ENCODE measurements at regions of chr17 and their contacts with region 1.

Region 1: DNA sequence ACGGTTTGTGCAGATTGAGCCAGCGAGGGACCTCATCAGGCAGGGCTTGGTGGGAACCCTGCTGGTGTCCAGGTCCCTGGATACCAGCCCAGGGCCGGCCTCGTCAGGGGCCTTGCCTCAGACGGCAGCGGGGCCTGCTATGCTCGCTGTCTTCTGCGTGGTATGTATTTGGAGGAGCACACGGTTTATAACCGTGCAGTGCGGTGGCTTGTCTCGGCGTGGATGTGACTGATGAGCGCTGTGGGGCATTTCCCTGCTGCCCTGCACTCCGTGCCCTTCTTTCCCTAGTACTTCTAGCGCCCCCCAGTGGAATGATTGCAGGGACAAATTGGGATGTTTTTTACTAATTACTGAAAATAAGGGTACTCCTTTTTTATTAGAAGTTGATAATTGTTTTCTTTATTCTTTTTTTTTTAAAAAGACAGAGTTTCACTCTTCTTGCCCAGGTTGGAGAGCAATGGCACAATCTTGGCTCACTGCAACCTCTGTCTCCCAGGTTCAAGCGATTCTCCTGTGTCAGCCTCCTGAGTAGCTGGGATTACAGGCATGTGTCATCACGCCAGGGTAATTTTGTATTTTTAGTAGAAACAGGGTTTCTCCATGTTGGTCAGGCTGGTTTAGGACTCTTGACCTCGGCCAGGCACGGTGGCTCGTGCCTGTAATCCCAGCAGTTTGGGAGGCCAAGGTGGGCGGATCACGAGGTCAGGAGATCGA is 15.3 kb downstream of the TBCD start:
- DNase-seq: peak in 1 of 5 donors; percentile 65
- ATAC-seq: peak in 3 of 4 donors; percentile 66 to 71 (median 67)
- H3K4me3 ChIP-seq: no peak overlapping the region
- H3K27ac ChIP-seq: no peak overlapping the region
- H3K4me1 ChIP-seq: peaks cover 0 to 5% (median 0%) of the 10 kb centered on the region in 12 donors
- H3K27me3 ChIP-seq: no peaks in the 10 kb centered on the region
- CTCF ChIP-seq: peak; percentile 34 to 65 (median 58)
- POLR2A ChIP-seq: no peak

Region 2: GRCh38 chr17:81928544-81929252 is 838.5 kb before region 1 on chr17:
- intact Hi-C with region 1: no loop called
- DNase-seq: no peak
- ATAC-seq: no peak
- H3K4me3 ChIP-seq: peak overlapping the region in 11 of 12 donors; percentile 27 to 98 (median 91)
- H3K27ac ChIP-seq: peak overlapping the region in 1 of 12 donors; percentile 39
- H3K4me1 ChIP-seq: peaks cover 16 to 43% (median 33%) of the 10 kb centered on the region in 12 donors
- H3K27me3 ChIP-seq: peaks cover 0 to 14% (median 0%) of the 10 kb centered on the region in 9 donors
- CTCF ChIP-seq: no peak
- POLR2A ChIP-seq: no peak

Region 3: GRCh38 chr17:82351716-82352488 is 415.3 kb before region 1 on chr17:
- intact Hi-C with region 1: loop called in 7 of 10 experiments (anchors 5 to 10 kb)
- DNase-seq: peak; percentile 79 to 88 (median 85)
- ATAC-seq: peak; percentile 49 to 91 (median 87)
- H3K4me3 ChIP-seq: no peak overlapping the region
- H3K27ac ChIP-seq: no peak overlapping the region
- H3K4me1 ChIP-seq: peaks cover 0 to 14% (median 3%) of the 10 kb centered on the region in 12 donors
- H3K27me3 ChIP-seq: peaks cover 0 to 11% (median 0%) of the 10 kb centered on the region in 9 donors
- CTCF ChIP-seq: peak; percentile 92 to 99 (median 97)
- POLR2A ChIP-seq: no peak

Region 4: DNA sequence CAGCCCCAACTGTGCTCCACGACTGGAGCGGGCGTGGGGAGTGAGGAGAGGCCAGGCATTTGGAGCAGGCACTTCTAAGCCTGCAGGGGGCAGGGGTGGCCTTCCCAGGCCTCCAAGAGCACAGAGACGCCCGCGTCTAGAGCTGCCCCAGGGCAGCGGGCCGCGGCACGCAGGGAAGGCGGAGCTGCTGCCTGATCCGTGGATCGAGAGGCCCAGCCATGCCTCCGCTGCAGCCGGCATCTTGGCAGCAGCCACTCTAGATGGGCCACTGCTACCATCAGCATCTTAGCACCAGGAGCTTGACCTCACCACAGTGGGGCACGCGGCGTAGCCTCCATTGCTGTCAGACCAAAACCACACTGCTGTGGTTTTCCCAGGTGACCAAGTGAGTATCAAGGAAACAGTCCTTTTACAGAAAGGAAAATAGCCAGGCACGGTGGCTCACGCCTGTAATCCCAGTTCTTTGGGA is 98.5 kb before region 1 on chr17:
- intact Hi-C with region 1: loop called in 8 of 10 experiments (anchors 1 to 10 kb)
- DNase-seq: peak; percentile 48 to 82 (median 78)
- ATAC-seq: peak; percentile 66 to 94 (median 92)
- H3K4me3 ChIP-seq: peak overlapping the region in 4 of 12 donors; percentile 10 to 27 (median 22)
- H3K27ac ChIP-seq: peak overlapping the region in 9 of 12 donors; percentile 11 to 88 (median 63)
- H3K4me1 ChIP-seq: peaks cover 0 to 23% (median 7%) of the 10 kb centered on the region in 12 donors
- H3K27me3 ChIP-seq: no peaks in the 10 kb centered on the region
- CTCF ChIP-seq: peak; percentile 45 to 68 (median 56)
- POLR2A ChIP-seq: no peak

Region 5: DNA sequence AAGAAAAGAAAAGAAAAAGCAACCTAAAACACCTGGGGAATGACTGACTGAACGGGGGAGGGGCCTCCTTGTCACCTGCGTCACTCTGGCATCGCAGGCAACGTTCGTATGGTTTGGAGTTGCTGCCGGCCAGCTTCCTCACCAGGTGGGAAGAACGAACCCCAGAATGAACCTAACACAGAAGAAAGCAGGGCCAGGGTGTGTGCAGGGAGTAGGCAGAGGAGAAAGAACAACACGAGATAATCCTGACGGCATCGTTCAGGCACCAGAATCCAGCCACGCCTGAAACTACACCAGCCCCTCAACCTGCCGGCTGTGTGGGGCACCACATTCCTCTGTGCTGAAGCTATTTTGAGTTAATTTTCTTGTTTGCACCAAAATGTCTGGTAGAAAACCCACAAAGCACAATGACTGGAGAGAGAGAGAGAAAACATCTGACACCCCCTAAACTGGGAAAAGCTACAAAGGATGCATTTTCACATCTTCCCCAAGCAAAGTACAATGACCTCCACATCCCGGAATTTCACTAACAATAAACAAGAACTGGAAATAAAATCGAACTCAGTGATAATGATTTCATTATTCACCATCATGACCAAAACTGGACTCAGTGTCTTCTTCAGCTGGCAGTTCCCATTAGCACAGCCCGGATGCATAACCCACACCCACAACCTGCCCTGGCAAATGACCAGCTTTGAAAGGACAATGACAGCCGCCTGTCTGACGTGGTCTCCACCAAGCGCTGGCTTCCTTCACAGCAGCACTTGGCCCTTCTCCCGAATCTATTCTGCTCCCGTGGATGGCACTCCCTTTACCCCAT is 92.3 kb before region 1 on chr17:
- intact Hi-C with region 1: loop called in 2 of 10 experiments (anchors 5 to 10 kb)
- DNase-seq: peak in 1 of 5 donors; percentile 43
- ATAC-seq: peak in 3 of 4 donors; percentile 40 to 83 (median 51)
- H3K4me3 ChIP-seq: no peak overlapping the region
- H3K27ac ChIP-seq: peak overlapping the region in 3 of 12 donors; percentile 4 to 33 (median 30)
- H3K4me1 ChIP-seq: peaks cover 0 to 19% (median 5%) of the 10 kb centered on the region in 12 donors
- H3K27me3 ChIP-seq: no peaks in the 10 kb centered on the region
- CTCF ChIP-seq: no peak
- POLR2A ChIP-seq: no peak

Region 6: GRCh38 chr17:82687375-82687861 is 79.8 kb before region 1 on chr17:
- intact Hi-C with region 1: no loop called
- DNase-seq: peak in 1 of 5 donors; percentile 42
- ATAC-seq: peak in 2 of 4 donors; percentile 43
- H3K4me3 ChIP-seq: no peak overlapping the region
- H3K27ac ChIP-seq: peak overlapping the region in 8 of 12 donors; percentile 1 to 86 (median 31)
- H3K4me1 ChIP-seq: peaks cover 0 to 15% (median 0%) of the 10 kb centered on the region in 12 donors
- H3K27me3 ChIP-seq: no peaks in the 10 kb centered on the region
- CTCF ChIP-seq: no peak
- POLR2A ChIP-seq: no peak

Region 7: DNA sequence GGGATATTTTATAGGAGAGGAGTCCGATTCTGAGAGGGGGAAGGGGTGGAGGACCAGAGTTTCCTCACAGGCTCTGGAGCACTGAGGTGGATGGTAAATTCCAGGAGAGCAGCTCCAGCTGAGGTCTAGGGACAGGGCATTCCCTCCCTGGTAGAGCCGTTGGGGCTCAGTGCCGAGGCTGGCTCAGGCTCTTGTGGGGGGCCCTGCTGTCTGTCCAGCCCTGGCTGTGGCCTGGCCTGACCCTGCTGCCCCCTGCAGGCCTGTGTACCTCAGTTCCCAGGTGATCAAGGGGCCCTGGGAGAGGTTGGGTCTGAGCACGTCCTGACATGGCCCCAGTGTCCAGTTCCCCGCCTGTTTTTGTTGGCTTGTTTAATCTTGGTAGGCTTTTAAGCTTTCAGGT is 55.8 kb after region 1 on chr17:
- intact Hi-C with region 1: no loop called
- DNase-seq: peak in 2 of 5 donors; percentile 24 to 48
- ATAC-seq: peak in 3 of 4 donors; percentile 13 to 79 (median 66)
- H3K4me3 ChIP-seq: no peak overlapping the region
- H3K27ac ChIP-seq: peak overlapping the region in 5 of 12 donors; percentile 19 to 49 (median 33)
- H3K4me1 ChIP-seq: peaks cover 0 to 4% (median 0%) of the 10 kb centered on the region in 12 donors
- H3K27me3 ChIP-seq: no peaks in the 10 kb centered on the region
- CTCF ChIP-seq: peak in 7 of 12 donors; percentile 7 to 31 (median 25)
- POLR2A ChIP-seq: no peak

Region 8: GRCh38 chr17:82848022-82848592 is 80.9 kb after region 1 on chr17:
- intact Hi-C with region 1: no loop called
- DNase-seq: peak in 1 of 5 donors; percentile 61
- ATAC-seq: peak in 3 of 4 donors; percentile 14 to 17 (median 15)
- H3K4me3 ChIP-seq: peak overlapping the region in 9 of 12 donors; percentile 2 to 50 (median 31)
- H3K27ac ChIP-seq: peak overlapping the region in 11 of 12 donors; percentile 6 to 94 (median 79)
- H3K4me1 ChIP-seq: peaks cover 0 to 20% (median 9%) of the 10 kb centered on the region in 12 donors
- H3K27me3 ChIP-seq: no peaks in the 10 kb centered on the region
- CTCF ChIP-seq: no peak
- POLR2A ChIP-seq: no peak

Measured in heart left ventricle (tissue), 16 donors.